ENCODE measurements at regions of chr3 and their contacts with region 1.

Region 1: DNA sequence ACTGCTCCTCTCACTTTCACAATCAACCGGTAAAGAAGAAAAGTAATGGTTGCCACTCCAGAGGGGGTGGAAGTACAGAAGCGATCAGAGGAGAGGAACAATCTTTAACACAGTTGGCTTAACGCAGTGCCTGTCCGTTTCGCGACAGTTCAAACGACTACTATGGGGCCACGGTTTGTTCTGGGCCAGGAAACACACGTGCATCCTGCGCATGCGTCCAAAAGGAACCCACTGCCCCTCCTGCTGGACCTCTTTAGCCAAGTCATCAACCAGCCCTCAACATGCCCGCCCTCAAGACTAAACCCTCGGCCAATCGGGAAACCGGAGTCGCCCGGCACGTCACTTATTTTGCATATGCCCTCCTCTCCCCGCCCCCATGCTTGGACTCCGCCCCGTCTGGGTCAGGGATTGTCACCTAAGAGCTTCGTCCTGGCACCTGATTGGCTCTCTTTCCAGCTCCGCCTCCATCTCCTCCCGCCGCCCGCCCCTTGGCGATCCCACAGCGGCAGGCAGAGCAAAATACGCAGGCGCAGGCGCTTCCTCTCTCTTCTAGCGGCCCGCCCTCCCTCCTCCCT is 345 bp upstream of the CDV3 start:
- DNase-seq: peak; percentile 100
- H3K4me3 ChIP-seq: peak overlapping the region; percentile 66 to 90 (median 84)
- H3K27ac ChIP-seq: peak overlapping the region; percentile 94 to 99 (median 96)
- H3K4me1 ChIP-seq: peaks cover 61 to 71% (median 67%) of the 10 kb centered on the region in 4 donors
- H3K27me3 ChIP-seq: no peaks in the 10 kb centered on the region
- CTCF ChIP-seq: no peak
- EP300 ChIP-seq: no peak
- POLR2A ChIP-seq: peak; percentile 45

Region 2: GRCh38 chr3:133439563-133439962 is 133.6 kb before region 1 on chr3:
- intact Hi-C with region 1: loop called (anchors 10 kb)
- DNase-seq: no peak
- H3K4me3 ChIP-seq: no peak overlapping the region
- H3K27ac ChIP-seq: no peak overlapping the region
- H3K4me1 ChIP-seq: peaks cover 0 to 13% (median 10%) of the 10 kb centered on the region in 4 donors
- H3K27me3 ChIP-seq: no peaks in the 10 kb centered on the region
- CTCF ChIP-seq: no peak
- EP300 ChIP-seq: no peak
- POLR2A ChIP-seq: no peak

Region 3: DNA sequence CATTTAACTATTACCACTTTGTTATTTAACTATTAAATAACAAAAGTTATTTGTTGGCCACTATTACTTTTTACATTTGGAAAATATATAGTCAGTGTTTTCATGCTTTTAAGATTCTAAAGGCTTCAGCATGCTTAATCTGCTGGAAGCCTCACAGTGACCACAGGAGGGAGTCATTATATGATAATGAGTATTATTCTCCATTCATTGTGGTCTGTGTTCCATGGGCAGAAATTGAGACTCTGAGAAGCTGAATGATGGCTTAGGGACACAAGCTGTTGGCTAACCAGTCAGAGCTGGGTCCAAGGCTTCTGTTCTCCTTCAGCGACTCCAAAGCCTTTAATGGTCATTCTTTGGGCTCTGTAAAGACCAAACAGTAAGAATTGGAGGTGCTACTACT is 108.6 kb before region 1 on chr3:
- intact Hi-C with region 1: loop called (anchors 10 kb)
- DNase-seq: no peak
- H3K4me3 ChIP-seq: no peak overlapping the region
- H3K27ac ChIP-seq: no peak overlapping the region
- H3K4me1 ChIP-seq: peaks cover 6 to 22% (median 19%) of the 10 kb centered on the region in 4 donors
- H3K27me3 ChIP-seq: no peaks in the 10 kb centered on the region
- CTCF ChIP-seq: peak in 1 of 3 experiments; percentile 14
- EP300 ChIP-seq: no peak
- POLR2A ChIP-seq: no peak

Region 4: GRCh38 chr3:133734305-133734704 is 161.2 kb after region 1 on chr3:
- intact Hi-C with region 1: no loop called
- DNase-seq: no peak
- H3K4me3 ChIP-seq: no peak overlapping the region
- H3K27ac ChIP-seq: no peak overlapping the region
- H3K4me1 ChIP-seq: no peaks in the 10 kb centered on the region
- H3K27me3 ChIP-seq: no peaks in the 10 kb centered on the region
- CTCF ChIP-seq: no peak
- EP300 ChIP-seq: no peak
- POLR2A ChIP-seq: no peak

Region 5: DNA sequence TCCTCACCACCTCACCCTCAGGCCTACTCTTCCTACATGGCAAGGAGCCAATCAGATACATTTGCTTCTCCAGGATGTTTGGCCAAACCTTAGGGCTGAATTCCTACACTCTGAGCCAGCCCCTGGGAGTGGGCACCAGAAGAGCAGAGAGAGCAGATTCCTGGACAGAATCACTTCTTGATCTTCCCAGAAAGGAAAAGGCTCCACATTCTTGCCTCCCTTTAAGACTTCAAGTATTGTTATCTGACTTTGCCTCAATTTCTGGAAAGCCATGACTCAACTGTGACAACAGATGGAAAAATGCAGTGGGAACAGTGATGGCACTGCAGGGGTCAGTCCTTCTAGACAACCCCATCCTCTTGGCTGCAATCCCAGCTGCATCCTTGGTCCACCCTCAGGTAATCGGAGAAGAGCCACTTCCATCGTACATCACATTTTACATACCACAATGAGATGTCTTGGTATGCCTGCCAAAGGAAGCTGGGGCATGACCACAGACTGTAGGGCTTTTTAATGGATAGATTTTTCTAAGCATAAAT is 435.5 kb after region 1 on chr3:
- intact Hi-C with region 1: no loop called
- DNase-seq: no peak
- H3K4me3 ChIP-seq: no peak overlapping the region
- H3K27ac ChIP-seq: no peak overlapping the region
- H3K4me1 ChIP-seq: peaks cover 0 to 4% (median 0%) of the 10 kb centered on the region in 4 donors
- H3K27me3 ChIP-seq: no peaks in the 10 kb centered on the region
- CTCF ChIP-seq: no peak
- EP300 ChIP-seq: no peak
- POLR2A ChIP-seq: no peak

Region 6: DNA sequence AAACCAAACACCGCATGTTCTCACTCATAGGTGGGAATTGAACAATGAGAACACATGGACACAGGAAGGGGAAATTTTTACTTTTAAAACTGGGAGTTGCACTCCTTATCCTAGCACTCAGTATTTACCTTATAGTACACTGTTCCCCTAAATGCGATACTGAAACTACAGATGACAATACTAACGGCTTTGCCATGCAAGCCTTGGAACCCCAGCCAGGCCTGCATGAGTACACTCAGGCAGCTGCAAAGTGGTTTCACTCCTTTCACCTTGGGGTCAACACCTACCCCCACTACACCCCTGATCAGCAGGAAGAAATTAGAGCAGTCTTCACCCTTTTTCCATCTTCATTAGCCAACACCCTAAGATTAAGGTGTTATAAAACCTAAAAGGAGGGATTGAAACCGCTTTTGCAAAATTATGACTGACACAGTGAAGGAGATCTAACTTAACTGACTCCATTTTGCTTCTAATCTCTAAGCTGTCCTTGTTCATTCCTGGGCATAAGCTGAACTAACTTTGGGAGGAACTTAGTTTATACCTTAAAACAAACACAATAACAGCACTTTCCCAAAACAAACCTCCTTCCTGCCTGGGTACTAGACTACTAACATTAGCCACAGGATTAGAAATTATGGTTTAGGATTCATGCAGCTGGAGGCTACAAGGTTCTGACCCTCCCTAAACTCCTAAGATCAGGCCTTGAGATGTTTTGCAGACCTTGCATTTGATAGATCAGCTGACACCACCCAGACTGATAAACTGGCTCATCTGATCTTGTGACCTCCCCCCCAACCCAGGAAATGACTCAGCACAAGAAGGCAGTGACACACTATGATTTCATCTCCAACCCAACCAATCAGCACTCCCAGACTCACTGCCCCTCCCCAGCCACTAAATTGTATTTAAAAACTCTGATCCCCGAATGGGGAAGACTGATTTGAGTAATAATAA is 1940.2 kb after region 1 on chr3:
- intact Hi-C with region 1: no loop called
- DNase-seq: peak; percentile 80
- H3K4me3 ChIP-seq: no peak overlapping the region
- H3K27ac ChIP-seq: no peak overlapping the region
- H3K4me1 ChIP-seq: no peaks in the 10 kb centered on the region
- H3K27me3 ChIP-seq: no peaks in the 10 kb centered on the region
- CTCF ChIP-seq: no peak
- EP300 ChIP-seq: no peak
- POLR2A ChIP-seq: no peak

Measured in esophagus muscularis mucosa (tissue), 4 donors.